Aorta (tissue), 5 donors: ENCODE measurements at regions of chr20 and their contacts with region 1.

Region 1: GRCh38 chr20:62808211-62808865 is 3.7 kb downstream of the OGFR start:
- DNase-seq: peak; percentile 79 to 92
- ATAC-seq: peak; percentile 73
- H3K4me3 ChIP-seq: no peak overlapping the region
- H3K27ac ChIP-seq: no peak overlapping the region
- H3K4me1 ChIP-seq: no peaks in the 10 kb centered on the region
- H3K27me3 ChIP-seq: no peaks in the 10 kb centered on the region

Region 2: DNA sequence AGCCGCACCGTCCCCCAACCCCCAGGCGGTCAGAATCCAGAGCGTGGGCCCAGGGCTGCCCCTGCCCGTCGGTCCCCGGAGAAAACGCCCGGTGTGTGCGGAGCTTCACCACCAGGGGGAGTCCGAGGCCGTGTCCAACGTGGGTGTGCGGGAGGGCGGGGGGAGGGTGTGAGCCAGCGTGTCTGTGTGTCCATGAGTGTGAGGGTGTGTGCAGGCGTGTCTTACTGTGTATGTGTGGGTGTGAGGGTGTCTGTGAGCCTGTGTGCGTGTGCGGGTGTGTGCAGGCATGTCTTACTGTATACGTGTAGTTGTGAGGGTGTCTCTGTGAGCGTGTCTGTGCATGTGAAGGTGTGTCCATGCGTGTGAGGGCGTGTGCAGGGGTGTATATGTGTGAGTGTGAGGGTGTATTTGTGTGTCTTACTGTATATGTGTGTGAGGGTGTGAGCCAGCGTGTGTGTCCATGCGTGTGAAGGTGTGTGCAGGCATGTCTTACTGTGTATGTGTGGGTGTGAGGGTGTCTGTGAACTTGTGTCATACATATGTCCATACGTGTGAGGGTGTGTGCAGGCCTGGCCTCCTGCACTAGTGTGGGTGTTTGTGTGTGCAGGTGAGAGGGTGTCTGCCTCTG is 308.0 kb before region 1 on chr20:
- intact Hi-C with region 1: loop called (anchors 5 kb)
- DNase-seq: peak; percentile 80 to 95
- ATAC-seq: peak; percentile 85
- H3K4me3 ChIP-seq: no peak overlapping the region
- H3K27ac ChIP-seq: no peak overlapping the region
- H3K4me1 ChIP-seq: no peaks in the 10 kb centered on the region
- H3K27me3 ChIP-seq: no peaks in the 10 kb centered on the region

Region 3: DNA sequence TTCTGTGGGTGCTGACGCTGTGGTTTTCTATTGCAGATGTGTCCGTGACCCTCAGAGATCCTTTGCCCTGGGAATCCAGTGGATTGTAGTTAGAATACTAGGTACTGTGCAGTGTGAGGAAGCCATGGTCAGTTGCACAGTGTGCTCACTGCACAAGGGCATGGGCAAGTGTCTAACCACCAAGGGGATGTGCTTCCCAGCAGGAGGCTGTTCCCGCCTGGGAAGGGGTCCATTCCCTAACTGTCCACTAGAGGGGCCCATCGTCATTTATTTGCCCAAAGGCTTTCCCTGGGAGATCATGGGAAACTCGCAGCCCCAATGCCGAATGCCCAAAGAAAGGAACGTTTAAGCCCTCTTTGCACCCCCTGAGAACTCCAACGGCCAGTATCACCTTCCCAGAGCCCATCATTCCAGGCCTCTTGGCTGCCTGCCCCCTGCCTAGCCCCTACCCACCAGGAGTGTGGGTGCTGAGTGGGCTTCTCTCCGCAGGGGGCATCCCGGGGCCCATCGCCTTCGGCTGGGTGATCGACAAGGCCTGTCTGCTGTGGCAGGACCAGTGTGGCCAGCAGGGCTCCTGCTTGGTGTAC is 139.8 kb before region 1 on chr20:
- intact Hi-C with region 1: loop called (anchors 1 to 5 kb)
- DNase-seq: peak in 1 of 2 donors; percentile 74
- ATAC-seq: peak; percentile 67
- H3K4me3 ChIP-seq: no peak overlapping the region
- H3K27ac ChIP-seq: no peak overlapping the region
- H3K4me1 ChIP-seq: no peaks in the 10 kb centered on the region
- H3K27me3 ChIP-seq: no peaks in the 10 kb centered on the region

Region 4: GRCh38 chr20:62953839-62954703 is 145.7 kb after region 1 on chr20:
- intact Hi-C with region 1: loop called in 1 of 2 experiments (anchors 10 kb)
- DNase-seq: peak; percentile 92
- ATAC-seq: peak; percentile 81
- H3K4me3 ChIP-seq: no peak overlapping the region
- H3K27ac ChIP-seq: peak overlapping the region; percentile 28 to 84
- H3K4me1 ChIP-seq: no peaks in the 10 kb centered on the region
- H3K27me3 ChIP-seq: no peaks in the 10 kb centered on the region